ENCODE measurements at regions of chr3 and their contacts with region 1.

Region 1: DNA sequence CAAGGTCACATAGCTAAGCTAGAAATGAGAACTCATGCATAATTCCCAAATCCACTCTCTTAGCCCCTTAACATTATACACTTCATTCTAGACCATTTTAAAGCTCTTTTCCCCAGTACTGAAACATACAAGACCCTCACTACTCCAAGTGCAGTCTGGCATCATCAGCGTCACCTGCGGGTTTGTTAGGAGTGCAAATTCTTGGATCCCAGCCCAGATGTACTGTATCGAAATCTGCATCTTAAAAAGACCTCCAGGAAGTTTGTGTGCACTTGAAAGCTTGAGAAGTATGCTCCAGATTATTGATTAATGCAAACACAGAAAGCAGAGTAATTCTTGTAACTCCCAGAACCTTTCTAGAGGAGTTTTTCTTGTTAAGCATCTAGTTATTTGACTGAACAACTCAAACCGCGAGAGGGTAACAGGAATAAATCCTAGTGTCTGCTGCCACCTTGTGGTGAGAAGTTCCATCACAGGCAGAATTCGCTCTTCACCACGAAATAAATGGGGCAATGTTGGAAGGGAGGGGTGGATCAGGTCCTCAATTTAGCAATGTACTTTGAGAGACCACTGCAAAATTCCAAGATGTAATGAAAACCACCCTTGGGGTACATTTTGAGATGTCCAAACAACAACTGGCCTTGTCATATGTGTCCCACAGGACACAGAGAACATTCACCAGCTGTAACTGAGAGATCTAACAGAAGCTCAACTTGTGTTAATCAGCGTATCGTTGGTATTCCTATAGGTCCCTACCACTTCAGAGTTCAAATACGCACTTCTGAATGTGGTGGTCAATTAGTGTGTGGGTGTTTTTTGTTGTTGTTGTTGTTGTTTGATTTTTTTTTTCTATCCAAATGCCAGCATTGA is 583 bp upstream of the C3orf49 start:
- DNase-seq: peak; percentile 10 to 28
- ATAC-seq: peak; percentile 52 to 84
- H3K4me3 ChIP-seq: no peak overlapping the region
- H3K27ac ChIP-seq: no peak overlapping the region
- H3K4me1 ChIP-seq: no peaks in the 10 kb centered on the region
- H3K27me3 ChIP-seq: no peaks in the 10 kb centered on the region
- CTCF ChIP-seq: peak; percentile 58 to 85 (median 75)
- POLR2A ChIP-seq: no peak

Region 2: DNA sequence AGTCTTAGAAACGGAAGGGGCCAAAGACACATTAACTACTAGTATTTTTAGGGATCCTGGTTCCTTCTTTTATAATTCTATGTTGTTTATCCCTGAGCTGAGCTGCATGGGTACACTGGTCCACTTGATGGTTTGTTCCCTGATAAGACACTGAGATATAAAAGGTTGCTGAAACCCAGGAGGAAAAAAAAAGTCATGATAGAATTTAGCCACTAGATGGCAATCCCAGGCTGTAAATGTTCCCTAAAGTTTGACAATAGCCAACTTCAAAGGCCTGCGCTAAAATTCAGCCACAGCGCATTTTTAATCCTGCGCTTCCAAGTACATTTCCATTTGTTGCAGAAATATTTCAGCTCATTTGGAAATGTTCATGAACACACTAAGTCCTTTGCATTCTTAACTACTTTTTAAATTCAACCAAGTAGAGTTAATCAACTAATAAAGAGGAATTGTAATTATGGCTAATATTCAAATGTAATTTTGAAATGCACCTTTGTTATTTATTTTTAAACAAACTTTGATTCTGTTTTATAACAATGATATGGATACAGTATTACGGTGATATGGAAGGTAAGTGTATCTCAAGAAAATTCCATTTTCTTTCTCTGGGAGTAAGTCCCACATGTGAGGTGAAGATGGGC is 1195.8 kb before region 1 on chr3:
- in situ Hi-C with region 1: loop called (anchors 10 to 25 kb)
- intact Hi-C with region 1: loop called (anchors 5 kb)
- DNase-seq: no peak
- ATAC-seq: no peak
- H3K4me3 ChIP-seq: no peak overlapping the region
- H3K27ac ChIP-seq: no peak overlapping the region
- H3K4me1 ChIP-seq: no peaks in the 10 kb centered on the region
- H3K27me3 ChIP-seq: no peaks in the 10 kb centered on the region
- CTCF ChIP-seq: peak; percentile 4 to 57 (median 30)
- POLR2A ChIP-seq: no peak

Region 3: DNA sequence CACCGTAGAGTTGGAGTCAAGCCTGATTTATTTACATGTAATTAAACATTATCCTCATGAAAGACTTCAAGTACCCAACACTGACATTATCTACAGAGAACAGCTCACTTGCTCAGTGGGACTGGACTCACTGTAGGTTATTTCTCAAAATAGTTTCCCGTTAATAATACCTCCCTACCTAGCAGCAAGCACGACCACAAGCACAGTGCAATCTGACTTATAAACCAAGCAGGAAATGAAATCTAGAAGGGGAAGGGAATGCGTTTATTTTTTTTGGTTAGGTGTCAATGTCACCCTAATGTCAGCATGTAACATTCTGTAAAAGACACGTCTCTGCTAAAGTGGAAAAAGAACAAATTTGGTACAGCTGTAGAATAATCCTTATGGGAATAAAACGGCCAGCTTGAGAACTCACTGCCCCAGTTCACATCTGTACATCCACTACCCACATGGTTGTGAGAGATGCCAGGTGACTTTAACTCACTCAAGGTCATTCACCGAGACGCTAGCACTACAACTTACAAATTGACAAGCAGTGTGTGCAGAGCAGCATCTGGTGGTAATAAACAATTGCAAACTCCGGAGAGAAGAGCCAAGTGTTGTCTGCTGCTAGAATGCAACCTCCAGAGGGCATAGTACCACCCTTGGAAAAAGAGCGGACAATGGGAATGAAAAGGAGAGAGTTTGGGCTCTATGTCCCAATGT is 1185.9 kb before region 1 on chr3:
- in situ Hi-C with region 1: loop called in 2 of 4 experiments (anchors 10 to 25 kb)
- intact Hi-C with region 1: no loop called
- DNase-seq: no peak
- ATAC-seq: no peak
- H3K4me3 ChIP-seq: no peak overlapping the region
- H3K27ac ChIP-seq: no peak overlapping the region
- H3K4me1 ChIP-seq: no peaks in the 10 kb centered on the region
- H3K27me3 ChIP-seq: no peaks in the 10 kb centered on the region
- CTCF ChIP-seq: no peak
- POLR2A ChIP-seq: no peak

Region 4: GRCh38 chr3:63349583-63350521 is 468.7 kb before region 1 on chr3:
- in situ Hi-C with region 1: loop called (anchors 5 to 10 kb)
- intact Hi-C with region 1: loop called (anchors 1 kb)
- DNase-seq: no peak
- ATAC-seq: no peak
- H3K4me3 ChIP-seq: no peak overlapping the region
- H3K27ac ChIP-seq: no peak overlapping the region
- H3K4me1 ChIP-seq: no peaks in the 10 kb centered on the region
- H3K27me3 ChIP-seq: peaks cover 0 to 11% (median 6%) of the 10 kb centered on the region in 3 donors
- CTCF ChIP-seq: peak in 3 of 5 experiments; percentile 17 to 56 (median 53)
- POLR2A ChIP-seq: no peak

Region 5: DNA sequence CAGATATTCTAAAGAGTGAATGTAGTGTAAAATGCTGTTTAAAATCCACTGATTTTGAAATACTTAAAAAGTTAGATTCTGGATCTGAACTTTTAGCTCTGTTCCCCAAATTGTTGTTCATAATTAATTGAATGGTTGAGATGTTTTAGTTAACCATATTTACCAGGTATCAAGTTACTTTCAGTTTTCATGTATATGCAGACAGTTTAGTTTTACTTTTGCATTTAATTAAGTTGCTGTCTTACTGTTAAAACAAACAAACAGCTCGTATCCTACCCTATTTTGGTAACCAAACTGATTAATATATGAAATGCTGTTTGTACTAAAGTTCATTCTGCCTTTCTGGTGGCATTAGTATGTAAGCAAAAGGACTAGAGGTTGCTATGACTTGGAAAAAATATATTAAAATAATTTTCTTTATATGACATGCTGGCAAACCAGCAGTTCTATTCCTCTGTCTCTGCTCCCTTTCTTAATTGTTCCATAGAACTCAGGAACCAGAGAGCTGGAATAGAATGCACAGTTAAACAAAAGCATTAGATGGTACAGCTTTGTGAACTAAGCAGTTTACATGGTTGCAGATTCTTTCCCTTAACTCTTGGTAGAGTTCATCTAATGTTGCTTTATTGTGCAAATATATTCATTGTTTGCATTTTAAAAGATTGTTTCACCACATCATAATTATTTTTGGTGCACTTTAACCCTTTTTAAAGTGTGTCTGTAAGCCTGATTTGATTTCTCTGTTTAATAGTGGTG is 133.2 kb after region 1 on chr3:
- in situ Hi-C with region 1: no loop called
- intact Hi-C with region 1: no loop called
- DNase-seq: no peak
- ATAC-seq: no peak
- H3K4me3 ChIP-seq: no peak overlapping the region
- H3K27ac ChIP-seq: peak overlapping the region in 1 of 4 donors; percentile 5
- H3K4me1 ChIP-seq: peaks cover 24 to 27% of the 10 kb centered on the region in 2 donors
- H3K27me3 ChIP-seq: no peaks in the 10 kb centered on the region
- CTCF ChIP-seq: no peak
- POLR2A ChIP-seq: no peak